ENCODE measurements at regions of chr12 and their contacts with region 1.

Region 1: DNA sequence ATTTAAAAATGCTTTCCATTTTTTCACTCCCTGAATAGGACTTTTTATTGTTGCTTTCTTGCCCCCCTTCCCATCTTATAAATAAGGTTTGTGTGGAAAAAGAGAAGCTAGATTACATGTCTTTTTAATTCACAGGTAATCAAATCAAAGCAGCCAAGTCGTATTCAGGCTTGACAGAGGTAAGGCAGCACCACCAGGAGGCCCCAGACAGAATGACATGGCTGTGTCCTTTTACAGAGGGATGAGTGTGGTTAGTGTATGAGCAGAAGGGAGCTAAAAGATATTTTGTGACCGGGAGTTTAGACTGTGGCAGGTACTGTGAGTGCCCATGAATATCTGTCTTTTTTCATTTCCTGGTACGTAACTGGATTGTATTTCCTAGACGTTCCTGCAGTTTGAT is 596.1 kb downstream of the ETNK1 start:
- DNase-seq: no peak
- H3K4me3 ChIP-seq: no peak overlapping the region
- H3K27ac ChIP-seq: no peak overlapping the region
- H3K4me1 ChIP-seq: no peaks in the 10 kb centered on the region
- H3K27me3 ChIP-seq: no peaks in the 10 kb centered on the region
- CTCF ChIP-seq: peak; percentile 57 to 78 (median 63)
- EP300 ChIP-seq: no peak
- POLR2A ChIP-seq: no peak
- RAD21 ChIP-seq: peak; percentile 81 to 86

Region 2: GRCh38 chr12:23236066-23236780 is 15.2 kb after region 1 on chr12:
- CTCF ChIA-PET with region 1: interaction called, 24 read pairs
- POLR2A ChIA-PET with region 1: no interaction called
- DNase-seq: no peak
- H3K4me3 ChIP-seq: no peak overlapping the region
- H3K27ac ChIP-seq: no peak overlapping the region
- H3K4me1 ChIP-seq: no peaks in the 10 kb centered on the region
- H3K27me3 ChIP-seq: no peaks in the 10 kb centered on the region
- CTCF ChIP-seq: no peak
- EP300 ChIP-seq: no peak
- POLR2A ChIP-seq: no peak
- RAD21 ChIP-seq: no peak

Region 3: GRCh38 chr12:23424685-23425084 is 203.6 kb after region 1 on chr12:
- CTCF ChIA-PET with region 1: no interaction called
- POLR2A ChIA-PET with region 1: no interaction called
- DNase-seq: no peak
- H3K4me3 ChIP-seq: no peak overlapping the region
- H3K27ac ChIP-seq: no peak overlapping the region
- H3K4me1 ChIP-seq: peaks cover 0 to 4% (median 2%) of the 10 kb centered on the region in 4 experiments; a peak in 2 of 7 replicates
- H3K27me3 ChIP-seq: no peaks in the 10 kb centered on the region
- CTCF ChIP-seq: no peak
- EP300 ChIP-seq: no peak
- POLR2A ChIP-seq: no peak
- RAD21 ChIP-seq: no peak

Region 4: DNA sequence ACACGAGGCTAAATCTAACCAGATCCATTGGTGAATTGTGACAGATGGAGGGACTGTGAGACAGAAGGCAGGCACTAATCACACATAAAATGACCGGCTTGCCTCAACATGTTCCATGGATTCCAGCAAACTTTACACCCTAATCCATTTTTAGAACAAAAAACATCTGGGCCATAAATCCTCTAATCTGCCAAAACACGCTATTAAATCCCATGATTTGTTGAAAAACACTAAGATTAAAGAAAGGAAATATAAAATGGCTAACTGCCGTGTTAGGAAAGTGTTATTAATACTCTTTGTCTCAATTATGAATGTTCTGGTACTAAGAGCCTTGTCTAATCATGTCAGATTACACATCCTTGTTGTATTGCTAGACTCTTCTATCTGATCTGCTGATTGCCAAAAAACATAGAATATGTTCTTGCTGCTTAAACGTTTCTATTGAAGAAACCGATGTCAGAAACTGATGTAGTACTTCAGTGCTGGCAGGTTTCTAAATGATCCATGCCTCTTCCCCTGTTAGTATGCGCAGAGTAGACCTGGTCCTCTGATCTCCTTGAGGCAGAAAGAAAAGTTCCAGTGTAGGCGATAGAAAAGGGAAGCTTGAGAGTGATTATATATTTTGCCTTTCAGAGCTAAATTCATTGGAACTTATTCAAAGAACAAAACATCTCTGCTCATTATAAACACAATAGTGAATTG is 343.5 kb after region 1 on chr12:
- CTCF ChIA-PET with region 1: no interaction called
- POLR2A ChIA-PET with region 1: no interaction called
- DNase-seq: no peak
- H3K4me3 ChIP-seq: no peak overlapping the region
- H3K27ac ChIP-seq: 0 out of 2 replicates have a peak overlapping the region, but pooled peaks have one; percentile 29
- H3K4me1 ChIP-seq: peaks cover 2 to 7% (median 4%) of the 10 kb centered on the region in 4 experiments; a peak in 5 of 7 replicates
- H3K27me3 ChIP-seq: no peaks in the 10 kb centered on the region
- CTCF ChIP-seq: no peak
- EP300 ChIP-seq: no peak
- POLR2A ChIP-seq: no peak
- RAD21 ChIP-seq: no peak

Measured in H1 (cell line).